ENCODE measurements at regions of chr1 and their contacts with region 1.

Region 1: DNA sequence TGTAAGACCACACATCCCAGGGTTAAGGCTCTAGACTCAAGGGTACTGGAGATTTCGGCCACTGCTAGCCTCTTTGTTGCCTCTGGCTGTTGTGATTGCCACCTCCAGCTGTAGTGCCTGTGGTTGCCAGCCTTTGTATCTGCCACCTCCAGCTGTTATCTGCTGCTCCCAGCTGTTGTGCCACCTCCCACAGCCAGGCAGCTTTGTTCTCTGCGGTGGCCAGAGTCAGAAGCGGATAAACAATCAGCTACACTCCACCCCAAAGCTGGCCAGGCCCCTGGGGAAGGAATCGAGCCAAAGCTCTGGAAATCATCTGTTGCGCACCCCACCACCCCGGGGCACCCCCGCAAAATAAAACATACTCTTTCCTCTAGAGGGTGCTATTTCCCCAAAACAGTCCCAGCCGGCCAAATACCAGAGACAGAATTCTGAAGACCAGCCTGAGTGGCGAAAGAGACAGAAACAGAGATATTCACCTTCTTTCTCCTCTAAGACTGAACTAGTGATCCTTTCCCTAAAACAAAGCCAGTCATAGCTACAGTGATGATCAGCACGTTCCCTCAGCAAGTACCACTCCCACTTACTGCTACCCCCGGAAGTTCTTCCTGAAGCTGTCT is 14.8 kb upstream of the PIGM start:
- DNase-seq: peak; percentile 56
- H3K4me3 Mint-ChIP-seq: peak overlapping the region; percentile 45
- H3K27ac Mint-ChIP-seq: no peak overlapping the region
- H3K4me1 Mint-ChIP-seq: peaks cover 9% of the 10 kb centered on the region
- H3K27me3 Mint-ChIP-seq: peaks cover 4% of the 10 kb centered on the region

Region 2: DNA sequence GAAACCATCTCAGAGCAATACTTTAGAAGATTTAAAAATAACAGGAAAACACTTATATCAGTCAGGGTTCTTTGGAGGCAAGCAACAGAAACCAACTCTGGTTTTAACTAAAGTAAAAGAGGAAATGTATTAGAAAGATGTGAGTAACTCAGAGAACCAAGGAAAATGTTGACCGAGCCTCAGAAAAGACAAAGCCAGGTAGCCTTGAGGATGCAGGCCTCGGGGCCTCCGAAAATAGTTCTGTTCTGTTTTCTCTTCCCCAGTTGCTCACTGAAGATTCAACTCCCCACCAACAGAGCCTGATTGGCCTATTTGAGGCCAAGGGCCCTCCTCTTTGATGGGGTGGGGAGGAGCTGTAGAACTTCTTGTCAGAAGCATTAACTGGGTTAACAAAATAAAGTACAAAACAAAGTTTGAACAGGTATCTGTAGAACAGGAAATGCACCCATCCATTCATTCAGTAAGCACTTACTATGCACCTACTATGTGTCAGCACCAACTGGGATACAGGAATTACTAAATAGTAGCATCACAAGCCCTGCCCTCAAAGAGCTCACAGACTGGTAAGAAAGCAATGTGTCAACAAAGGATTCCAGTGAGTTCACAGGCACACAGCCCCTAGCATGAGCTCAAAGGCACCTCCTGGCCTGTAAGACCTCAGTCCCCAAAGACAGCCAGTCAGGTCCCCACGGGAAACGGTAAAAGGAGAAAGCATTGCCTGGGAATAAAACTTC is 207.3 kb before region 1 on chr1:
- CTCF ChIA-PET with region 1: no interaction called
- intact Hi-C with region 1: no loop called
- DNase-seq: peak; percentile 18
- H3K4me3 Mint-ChIP-seq: no peak overlapping the region
- H3K27ac Mint-ChIP-seq: no peak overlapping the region
- H3K4me1 Mint-ChIP-seq: peaks cover 16% of the 10 kb centered on the region
- H3K27me3 Mint-ChIP-seq: no peaks in the 10 kb centered on the region

Region 3: DNA sequence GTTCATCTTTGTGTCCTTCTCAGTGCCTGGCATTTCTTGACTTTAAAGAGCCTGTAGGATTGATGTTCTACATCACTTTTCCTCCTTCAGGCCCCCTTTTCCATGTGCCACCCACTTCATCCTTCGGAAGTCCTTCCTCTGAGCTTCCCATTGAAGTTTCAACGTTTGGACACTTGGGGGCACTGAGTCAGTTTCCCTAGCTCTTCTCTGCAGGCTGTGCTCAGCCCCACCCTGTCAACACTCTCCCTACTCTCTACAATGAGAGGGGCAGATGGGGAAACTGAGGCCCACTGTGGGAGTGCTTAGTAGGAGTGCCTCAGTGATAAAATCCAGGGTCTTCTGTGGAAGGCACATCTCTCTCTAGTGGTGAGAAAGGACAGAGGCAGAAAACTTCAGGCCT is 11.5 kb after region 1 on chr1:
- CTCF ChIA-PET with region 1: interaction called, 27 read pairs
- intact Hi-C with region 1: no loop called
- DNase-seq: no peak
- H3K4me3 Mint-ChIP-seq: no peak overlapping the region
- H3K27ac Mint-ChIP-seq: no peak overlapping the region
- H3K4me1 Mint-ChIP-seq: no peaks in the 10 kb centered on the region
- H3K27me3 Mint-ChIP-seq: peaks cover 6% of the 10 kb centered on the region

Region 4: GRCh38 chr1:160064164-160064563 is 17.6 kb after region 1 on chr1:
- CTCF ChIA-PET with region 1: interaction called, 27 read pairs
- intact Hi-C with region 1: no loop called
- DNase-seq: no peak
- H3K4me3 Mint-ChIP-seq: no peak overlapping the region
- H3K27ac Mint-ChIP-seq: no peak overlapping the region
- H3K4me1 Mint-ChIP-seq: no peaks in the 10 kb centered on the region
- H3K27me3 Mint-ChIP-seq: no peaks in the 10 kb centered on the region

Region 5: DNA sequence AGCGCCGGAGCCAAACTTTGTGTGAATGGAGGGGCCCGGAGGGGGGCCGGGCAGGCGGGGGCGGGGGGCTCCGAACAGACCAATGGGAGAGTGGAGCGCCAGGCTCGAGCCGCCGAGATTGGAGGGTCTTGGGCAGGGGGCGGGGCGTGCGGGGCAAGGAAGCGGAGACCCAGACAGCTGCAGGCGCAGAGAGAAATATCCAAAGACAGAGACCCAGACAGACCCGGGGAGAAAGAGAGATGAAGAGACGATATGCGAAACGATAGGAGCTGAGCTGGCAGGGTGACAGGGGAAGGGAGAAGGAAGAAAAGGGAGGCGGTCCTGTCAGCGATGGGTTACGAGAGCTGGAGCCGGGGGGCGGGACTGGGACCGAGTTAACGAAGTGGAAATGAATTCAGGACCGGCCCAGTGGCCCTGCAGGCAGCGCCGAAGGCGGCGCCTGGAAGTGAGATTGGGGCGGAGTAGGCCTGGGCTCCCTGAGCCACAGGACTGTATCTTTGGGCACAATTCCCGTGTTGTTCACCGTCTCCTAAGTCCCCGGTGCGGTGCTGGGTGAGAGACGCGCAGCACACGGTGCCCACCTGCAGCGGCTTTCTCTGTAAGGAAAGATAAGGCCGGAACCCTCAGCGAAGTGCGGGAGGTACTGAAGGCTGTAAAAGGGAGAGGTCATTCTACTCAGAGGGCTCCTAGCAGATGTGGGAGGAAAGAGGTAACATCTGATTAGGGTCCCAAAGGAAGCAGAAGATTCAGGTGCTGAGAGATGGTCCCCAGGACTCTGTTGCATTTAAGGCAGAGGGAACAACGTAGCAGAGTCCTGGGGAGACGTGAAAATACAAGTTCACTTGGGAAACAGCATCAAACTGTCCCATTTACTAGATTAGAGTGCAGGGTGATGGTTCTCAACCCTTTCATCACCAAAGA is 23.9 kb after region 1 on chr1:
- CTCF ChIA-PET with region 1: interaction called, 565 read pairs
- intact Hi-C with region 1: no loop called
- DNase-seq: peak; percentile 62
- H3K4me3 Mint-ChIP-seq: peak overlapping the region; percentile 82
- H3K27ac Mint-ChIP-seq: no peak overlapping the region
- H3K4me1 Mint-ChIP-seq: peaks cover 16% of the 10 kb centered on the region
- H3K27me3 Mint-ChIP-seq: peaks cover 15% of the 10 kb centered on the region

Region 6: DNA sequence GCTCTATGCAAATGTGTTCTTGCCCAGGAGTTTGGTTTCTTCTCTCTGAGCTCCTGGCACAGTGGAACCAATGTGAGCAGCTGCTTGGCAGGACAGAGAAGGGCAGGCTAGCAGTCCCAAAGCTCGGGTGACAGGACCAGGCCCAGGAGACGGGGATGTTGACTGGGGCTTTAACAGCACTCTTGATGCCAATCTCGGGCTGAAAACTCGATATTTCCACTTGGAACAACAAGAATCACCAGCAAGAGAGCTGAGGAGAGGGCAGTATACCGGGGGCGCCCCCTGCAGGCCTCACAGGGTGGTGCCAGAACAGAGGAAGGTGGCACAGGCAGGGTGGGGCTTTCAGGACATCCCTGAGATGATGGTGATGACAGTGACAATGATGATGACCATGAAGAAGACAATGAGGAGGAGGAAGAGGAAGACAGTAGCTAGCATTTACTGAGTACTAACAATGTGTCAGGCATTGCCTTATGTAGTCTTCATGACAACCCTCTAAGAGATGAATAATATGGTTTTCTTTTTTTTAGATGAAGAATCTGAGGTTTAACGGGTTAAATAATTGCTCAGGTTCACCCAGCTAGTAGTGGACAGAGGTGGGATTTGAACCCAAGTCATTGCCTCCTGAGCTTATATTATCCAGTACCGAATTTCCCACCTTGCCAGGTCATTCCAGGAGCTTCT is 32.1 kb after region 1 on chr1:
- CTCF ChIA-PET with region 1: interaction called, 565 read pairs
- intact Hi-C with region 1: loop called (anchors 1 kb)
- DNase-seq: peak; percentile 77
- H3K4me3 Mint-ChIP-seq: no peak overlapping the region
- H3K27ac Mint-ChIP-seq: no peak overlapping the region
- H3K4me1 Mint-ChIP-seq: no peaks in the 10 kb centered on the region
- H3K27me3 Mint-ChIP-seq: peaks cover 40% of the 10 kb centered on the region

Region 7: DNA sequence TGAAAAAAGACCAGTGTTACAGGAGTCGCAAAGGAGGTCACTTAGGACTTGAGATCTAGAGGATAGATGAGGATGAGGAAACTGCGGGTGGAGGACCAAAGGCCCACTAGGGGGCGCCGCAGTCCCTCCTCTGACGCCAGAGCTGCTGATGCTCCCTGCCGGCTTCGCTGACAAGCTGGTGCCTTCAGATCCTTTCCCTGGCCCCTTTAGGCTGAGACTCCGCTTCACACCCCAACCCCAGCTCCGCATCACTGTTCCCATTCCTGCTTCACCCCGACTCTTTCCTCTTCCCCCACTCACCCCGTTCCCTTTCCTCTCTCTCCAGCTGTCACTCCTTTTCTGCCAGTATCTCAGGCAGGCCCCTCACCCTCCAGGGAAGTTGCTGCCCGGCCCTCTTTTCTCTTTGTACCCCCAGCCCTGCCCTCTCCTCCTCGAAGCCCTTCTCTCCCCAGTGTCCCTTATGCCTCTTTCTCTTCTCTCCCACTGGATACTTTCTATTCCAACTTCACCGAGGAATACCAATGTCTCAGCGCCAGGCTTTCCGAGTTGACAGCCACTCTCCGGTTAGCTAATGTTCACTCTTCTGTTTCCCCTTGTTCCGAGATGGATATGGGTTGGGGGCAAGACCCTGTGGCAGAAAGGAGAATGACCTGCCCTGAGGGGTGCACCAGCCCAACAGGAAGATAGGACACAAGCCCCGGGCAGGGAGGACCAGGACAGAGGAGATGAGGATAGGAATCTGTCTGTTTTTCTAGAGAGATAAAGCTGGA is 39.3 kb after region 1 on chr1:
- CTCF ChIA-PET with region 1: interaction called, 565 read pairs
- intact Hi-C with region 1: loop called (anchors 1 kb)
- DNase-seq: peak; percentile 88
- H3K4me3 Mint-ChIP-seq: no peak overlapping the region
- H3K27ac Mint-ChIP-seq: no peak overlapping the region
- H3K4me1 Mint-ChIP-seq: peaks cover 5% of the 10 kb centered on the region
- H3K27me3 Mint-ChIP-seq: peaks cover 17% of the 10 kb centered on the region

Measured in activated naive CD4-positive, alpha-beta T cell treated with anti-CD3 and anti-CD28 coated beads for 36 hours (primary cell).